OCI-LY7 (cell line): ENCODE measurements at regions of chr7 and their contacts with region 1.

Region 1: DNA sequence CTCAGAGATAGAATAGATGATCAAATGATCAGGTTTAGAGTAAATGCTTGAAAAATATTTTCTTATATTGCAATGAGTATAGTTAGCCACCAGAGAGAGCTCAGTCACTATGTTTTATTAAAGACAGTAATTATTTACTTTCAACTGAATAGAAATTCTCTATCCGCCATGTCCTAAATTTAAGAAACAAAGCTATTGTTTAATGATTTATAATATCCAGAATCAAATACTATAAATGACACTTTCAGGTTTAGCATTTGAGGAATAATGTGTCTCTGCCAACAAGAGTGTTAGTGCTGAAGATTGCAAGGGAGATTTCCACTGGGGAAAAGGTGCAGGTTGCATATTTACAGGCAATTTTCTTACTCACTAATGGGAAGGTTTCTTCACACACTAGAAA is 184.7 kb downstream of the DGKB start:
- DNase-seq: no peak
- H3K4me3 ChIP-seq: no peak overlapping the region
- H3K27ac ChIP-seq: no peak overlapping the region
- H3K4me1 ChIP-seq: no peaks in the 10 kb centered on the region
- CTCF ChIP-seq: peak; percentile 67

Region 2: GRCh38 chr7:15015545-15016326 is 297.9 kb after region 1 on chr7:
- CTCF ChIA-PET with region 1: no interaction called
- POLR2A ChIA-PET with region 1: no interaction called
- intact Hi-C with region 1: loop called (anchors 10 kb)
- DNase-seq: peak; percentile 35
- H3K4me3 ChIP-seq: no peak overlapping the region
- H3K27ac ChIP-seq: no peak overlapping the region
- H3K4me1 ChIP-seq: no peaks in the 10 kb centered on the region
- CTCF ChIP-seq: peak; percentile 78